CD4-positive, alpha-beta memory T cell (primary cell): ENCODE measurements at regions of chr13 and their contacts with region 1.

Region 1: DNA sequence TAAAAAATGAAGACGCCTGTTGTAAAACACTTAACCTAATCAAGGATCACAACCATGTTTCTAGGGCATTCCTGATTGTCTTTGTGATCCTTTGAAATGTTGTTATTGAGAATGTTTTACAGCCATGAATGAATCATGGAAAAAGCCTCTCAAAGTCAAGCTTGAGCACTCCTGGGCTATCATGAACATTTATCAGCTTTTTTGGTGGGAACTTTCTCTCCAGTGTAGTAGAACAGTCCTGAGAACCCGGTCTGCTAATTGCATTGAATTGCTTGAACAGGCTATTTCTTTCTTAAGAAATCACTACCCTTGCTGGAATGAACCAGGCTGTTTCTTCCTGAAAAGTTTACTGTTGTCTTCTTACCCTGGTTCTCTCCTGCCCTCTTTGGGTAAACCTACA is 516.5 kb downstream of the FGF9 start:
- DNase-seq: peak in 2 of 5 donors; percentile 2 to 3
- H3K4me3 ChIP-seq: no peak overlapping the region
- H3K4me3 Mint-ChIP-seq: no peak overlapping the region
- H3K27ac ChIP-seq: no peak overlapping the region
- H3K27ac Mint-ChIP-seq: peak overlapping the region in 1 of 7 donors; percentile 15
- H3K4me1 ChIP-seq: peaks cover 5% of the 10 kb centered on the region
- H3K4me1 Mint-ChIP-seq: peaks cover 4 to 10% (median 5%) of the 10 kb centered on the region in 4 donors
- H3K27me3 ChIP-seq: no peaks in the 10 kb centered on the region
- H3K27me3 Mint-ChIP-seq: no peaks in the 10 kb centered on the region

Region 2: DNA sequence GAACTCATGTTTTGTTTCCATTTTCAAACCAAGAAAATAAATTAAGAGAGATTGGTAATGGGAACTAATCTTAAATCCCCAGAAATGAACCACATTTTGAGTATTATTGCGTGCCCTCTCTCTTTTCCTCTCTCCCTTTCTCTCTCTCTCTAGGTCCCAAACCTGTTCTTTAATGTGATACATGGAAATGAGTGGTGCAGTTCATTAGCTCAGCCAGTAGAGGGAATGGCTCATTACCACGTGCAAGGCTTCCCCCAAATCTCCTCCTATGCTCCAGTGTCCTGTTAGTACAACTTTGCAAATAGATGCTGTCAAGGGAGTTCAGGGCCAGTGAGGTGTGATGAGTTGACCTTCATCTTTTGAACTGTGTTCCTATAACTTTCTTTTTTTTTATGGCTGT is 338.0 kb before region 1 on chr13:
- CTCF ChIA-PET with region 1: interaction called, 5 read pairs
- POLR2A ChIA-PET with region 1: no interaction called
- intact Hi-C with region 1: loop called (anchors 2 kb)
- DNase-seq: peak in 4 of 5 donors; percentile 25 to 32 (median 29)
- H3K4me3 ChIP-seq: no peak overlapping the region
- H3K4me3 Mint-ChIP-seq: no peak overlapping the region
- H3K27ac ChIP-seq: no peak overlapping the region
- H3K27ac Mint-ChIP-seq: no peak overlapping the region
- H3K4me1 ChIP-seq: no peaks in the 10 kb centered on the region
- H3K4me1 Mint-ChIP-seq: peaks cover 0 to 6% (median 5%) of the 10 kb centered on the region in 4 donors
- H3K27me3 ChIP-seq: no peaks in the 10 kb centered on the region
- H3K27me3 Mint-ChIP-seq: peaks cover 0 to 6% of the 10 kb centered on the region in 2 donors

Region 3: DNA sequence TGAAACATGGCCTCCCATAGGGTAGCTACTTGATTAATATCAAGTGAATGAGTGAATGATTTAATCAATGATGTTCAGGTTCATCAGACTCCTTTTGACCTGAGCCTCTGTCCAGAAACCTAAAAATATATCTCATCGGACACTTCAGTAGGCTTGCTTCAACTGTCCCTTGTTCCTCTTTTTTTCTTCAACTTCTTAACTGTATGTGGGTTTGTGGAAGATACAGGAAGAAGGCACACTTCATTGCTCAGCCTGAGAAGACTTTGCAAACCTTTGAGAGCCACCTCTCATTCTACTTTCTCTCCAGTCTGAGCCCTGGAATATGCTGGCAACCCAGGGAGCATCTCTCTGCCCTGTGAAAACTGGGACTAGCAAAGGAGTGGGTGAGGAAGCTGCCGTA is 40.6 kb after region 1 on chr13:
- CTCF ChIA-PET with region 1: no interaction called
- POLR2A ChIA-PET with region 1: no interaction called
- intact Hi-C with region 1: no loop called
- DNase-seq: no peak
- H3K4me3 ChIP-seq: no peak overlapping the region
- H3K4me3 Mint-ChIP-seq: no peak overlapping the region
- H3K27ac ChIP-seq: no peak overlapping the region
- H3K27ac Mint-ChIP-seq: no peak overlapping the region
- H3K4me1 ChIP-seq: no peaks in the 10 kb centered on the region
- H3K4me1 Mint-ChIP-seq: peaks cover 3 to 15% (median 9%) of the 10 kb centered on the region in 4 donors
- H3K27me3 ChIP-seq: no peaks in the 10 kb centered on the region
- H3K27me3 Mint-ChIP-seq: no peaks in the 10 kb centered on the region